Activated CD4-positive, alpha-beta memory T cell treated with anti-CD3 and anti-CD28 coated beads, Interleukin-2, amount 10 ng/mL, durations not matched to agents 7 days and 5 days (primary cell): ENCODE measurements at regions of chr11 and their contacts with region 1.

Region 1: DNA sequence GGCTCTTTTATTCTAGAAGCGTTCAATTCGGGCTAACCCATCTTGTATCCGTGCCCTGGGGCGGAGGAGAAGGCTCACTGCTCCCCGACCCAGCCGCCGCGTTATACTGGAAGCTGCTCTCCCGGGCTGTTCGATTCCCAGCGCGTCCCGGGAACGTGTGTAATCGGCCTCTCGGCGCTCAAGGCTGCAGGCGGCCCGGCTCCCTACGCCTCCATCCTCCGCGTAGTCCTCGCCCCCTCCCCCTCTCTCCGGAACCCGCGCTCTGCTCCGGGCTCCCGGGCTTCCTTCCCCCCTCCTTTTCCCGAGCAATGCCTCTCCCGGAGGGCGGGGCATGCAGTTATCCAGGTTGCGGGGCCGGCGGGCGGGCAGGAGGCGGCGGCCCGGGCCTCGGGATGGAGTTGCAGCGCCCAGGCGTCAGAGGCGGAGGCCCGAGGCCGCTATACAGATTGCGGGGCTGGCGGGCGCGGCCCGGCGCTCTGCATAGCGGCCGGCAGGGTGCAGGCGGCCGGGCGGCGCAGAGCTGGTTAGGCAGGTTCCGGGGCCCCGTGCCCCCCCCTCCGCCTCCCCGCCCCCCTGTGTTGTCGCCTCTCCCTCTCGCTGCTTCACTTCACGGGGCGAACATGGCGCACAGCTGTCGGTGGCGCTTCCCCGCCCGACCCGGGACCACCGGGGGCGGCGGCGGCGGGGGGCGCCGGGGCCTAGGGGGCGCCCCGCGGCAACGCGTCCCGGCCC is at the start of gene KMT2A:
- DNase-seq: peak; percentile 93
- H3K4me3 Mint-ChIP-seq: peak within 1 kb of the TSS; percentile 93
- H3K27ac Mint-ChIP-seq: peak within 1 kb of the TSS; percentile 91
- H3K4me1 Mint-ChIP-seq: peaks cover 42% of the 10 kb centered on the region
- H3K27me3 Mint-ChIP-seq: no peaks in the 10 kb centered on the region
- total RNA-seq, gene KMT2A: 94.6 to 102 TPM

Region 2: GRCh38 chr11:118109231-118109630 is 326.8 kb before region 1 on chr11:
- CTCF ChIA-PET with region 1: no interaction called
- POLR2A ChIA-PET with region 1: no interaction called
- DNase-seq: no peak
- H3K4me3 Mint-ChIP-seq: no peak overlapping the region
- H3K27ac Mint-ChIP-seq: no peak overlapping the region
- H3K4me1 Mint-ChIP-seq: peaks cover 3% of the 10 kb centered on the region
- H3K27me3 Mint-ChIP-seq: peaks cover 17% of the 10 kb centered on the region

Region 3: GRCh38 chr11:118401151-118401878 is 34.7 kb before region 1 on chr11 and contains the start of gene ATP5MG:
- CTCF ChIA-PET with region 1: interaction called, 19 read pairs
- POLR2A ChIA-PET with region 1: interaction called, 77 read pairs
- DNase-seq: peak; percentile 92
- H3K4me3 Mint-ChIP-seq: peak within 1 kb of the TSS; percentile 85
- H3K27ac Mint-ChIP-seq: peak within 1 kb of the TSS; percentile 97
- H3K4me1 Mint-ChIP-seq: peaks cover 74% of the 10 kb centered on the region
- H3K27me3 Mint-ChIP-seq: no peaks in the 10 kb centered on the region
- total RNA-seq, gene ATP5MG: 251 to 260 TPM

Region 4: GRCh38 chr11:118415739-118416284 is 20.2 kb before region 1 on chr11:
- CTCF ChIA-PET with region 1: interaction called, 7 read pairs
- POLR2A ChIA-PET with region 1: interaction called, 13 read pairs
- DNase-seq: peak; percentile 59
- H3K4me3 Mint-ChIP-seq: no peak overlapping the region
- H3K27ac Mint-ChIP-seq: no peak overlapping the region
- H3K4me1 Mint-ChIP-seq: no peaks in the 10 kb centered on the region
- H3K27me3 Mint-ChIP-seq: no peaks in the 10 kb centered on the region

Region 5: GRCh38 chr11:118448294-118448693 is 12.2 kb after region 1 on chr11:
- CTCF ChIA-PET with region 1: interaction called, 10 read pairs
- POLR2A ChIA-PET with region 1: interaction called, 28 read pairs
- DNase-seq: no peak
- H3K4me3 Mint-ChIP-seq: no peak overlapping the region
- H3K27ac Mint-ChIP-seq: peak overlapping the region; percentile 65
- H3K4me1 Mint-ChIP-seq: peaks cover 69% of the 10 kb centered on the region
- H3K27me3 Mint-ChIP-seq: no peaks in the 10 kb centered on the region

Region 6: DNA sequence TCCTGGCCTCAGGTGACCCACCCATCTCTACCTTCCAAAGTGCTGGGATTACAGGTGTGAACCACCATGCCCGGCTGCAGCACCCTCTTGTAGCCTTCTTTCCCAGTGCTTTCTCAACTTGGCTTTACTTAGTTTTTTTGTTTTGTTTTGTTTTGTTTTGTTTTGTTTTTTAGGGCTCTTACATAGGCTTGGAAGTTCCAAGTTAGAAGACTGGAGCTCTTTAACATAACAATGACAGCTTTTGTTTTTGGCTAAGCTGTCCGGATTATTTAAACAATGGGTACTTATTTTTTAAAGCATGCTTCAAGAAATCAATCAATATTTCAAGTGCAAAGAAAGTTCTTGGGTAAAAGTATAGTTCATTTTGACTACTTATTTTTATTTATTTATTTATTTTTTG is 26.1 kb after region 1 on chr11:
- CTCF ChIA-PET with region 1: no interaction called
- POLR2A ChIA-PET with region 1: interaction called, 11 read pairs
- DNase-seq: no peak
- H3K4me3 Mint-ChIP-seq: no peak overlapping the region
- H3K27ac Mint-ChIP-seq: no peak overlapping the region
- H3K4me1 Mint-ChIP-seq: peaks cover 11% of the 10 kb centered on the region
- H3K27me3 Mint-ChIP-seq: no peaks in the 10 kb centered on the region

Region 7: GRCh38 chr11:118522571-118523072 is 86.6 kb after region 1 on chr11:
- CTCF ChIA-PET with region 1: no interaction called
- POLR2A ChIA-PET with region 1: no interaction called
- DNase-seq: no peak
- H3K4me3 Mint-ChIP-seq: no peak overlapping the region
- H3K27ac Mint-ChIP-seq: peak overlapping the region; percentile 51
- H3K4me1 Mint-ChIP-seq: peaks cover 2% of the 10 kb centered on the region
- H3K27me3 Mint-ChIP-seq: no peaks in the 10 kb centered on the region